Activated CD4-positive, alpha-beta T cell treated with anti-CD3 and anti-CD28 coated beads for 36 hours (primary cell): ENCODE measurements at regions of chr1 and their contacts with region 1.

Region 1: DNA sequence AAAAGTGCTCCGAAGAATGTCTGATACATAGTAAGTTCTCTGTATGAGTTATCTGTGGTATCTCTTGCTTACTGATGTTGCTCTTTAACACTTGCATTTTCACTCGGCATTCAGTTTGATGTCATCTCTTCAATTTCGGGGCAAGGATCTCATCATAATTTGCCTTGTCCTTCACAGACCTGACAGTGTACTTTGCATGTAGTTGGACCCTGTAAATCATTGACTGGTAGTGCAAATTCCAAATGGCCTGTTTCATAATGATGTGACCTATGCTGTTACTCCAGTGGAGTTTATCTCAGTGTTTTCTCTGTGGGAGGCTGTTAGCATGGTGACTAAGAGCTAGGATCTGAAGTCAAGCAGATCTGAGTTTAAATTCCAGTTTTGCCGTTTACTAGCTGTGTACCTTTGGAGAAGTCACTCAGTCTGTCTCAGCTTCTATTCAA is 34.2 kb upstream of the ABCD3 start:
- DNase-seq: peak; percentile 22
- ATAC-seq: peak; percentile 76
- H3K4me3 Mint-ChIP-seq: peak overlapping the region; percentile 61
- H3K27ac Mint-ChIP-seq: peak overlapping the region; percentile 92
- H3K4me1 Mint-ChIP-seq: peaks cover 62% of the 10 kb centered on the region
- H3K27me3 Mint-ChIP-seq: no peaks in the 10 kb centered on the region

Region 2: DNA sequence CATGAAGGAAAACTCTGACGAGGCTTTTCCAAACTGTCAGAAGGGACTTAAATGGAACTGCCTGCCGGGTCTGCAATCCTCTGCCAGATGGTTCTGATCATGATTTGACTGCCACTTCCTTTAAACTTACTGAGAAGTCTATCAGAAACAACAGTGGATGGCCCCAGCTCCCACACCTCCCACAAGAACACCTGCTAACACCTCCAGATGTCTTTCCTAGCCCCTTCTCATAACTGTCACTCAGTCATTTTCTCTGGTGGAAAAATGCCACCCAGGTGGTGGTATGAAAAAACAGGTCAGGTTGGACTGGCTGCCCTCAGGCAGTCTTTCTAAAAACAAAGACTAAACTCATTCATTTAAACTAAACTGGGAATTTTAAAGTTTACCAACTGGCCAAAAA is 32.5 kb before region 1 on chr1:
- CTCF ChIA-PET with region 1: no interaction called
- POLR2A ChIA-PET with region 1: no interaction called
- intact Hi-C with region 1: loop called in 1 of 2 experiments (anchors 1 kb)
- DNase-seq: peak; percentile 17
- ATAC-seq: peak; percentile 26
- H3K4me3 Mint-ChIP-seq: no peak overlapping the region
- H3K27ac Mint-ChIP-seq: peak overlapping the region; percentile 53
- H3K4me1 Mint-ChIP-seq: peaks cover 14% of the 10 kb centered on the region
- H3K27me3 Mint-ChIP-seq: peaks cover 9% of the 10 kb centered on the region